Activated naive CD4-positive, alpha-beta T cell treated with anti-CD3 and anti-CD28 coated beads for 36 hours (primary cell): ENCODE measurements at regions of chr13 and their contacts with region 1.

Region 1: DNA sequence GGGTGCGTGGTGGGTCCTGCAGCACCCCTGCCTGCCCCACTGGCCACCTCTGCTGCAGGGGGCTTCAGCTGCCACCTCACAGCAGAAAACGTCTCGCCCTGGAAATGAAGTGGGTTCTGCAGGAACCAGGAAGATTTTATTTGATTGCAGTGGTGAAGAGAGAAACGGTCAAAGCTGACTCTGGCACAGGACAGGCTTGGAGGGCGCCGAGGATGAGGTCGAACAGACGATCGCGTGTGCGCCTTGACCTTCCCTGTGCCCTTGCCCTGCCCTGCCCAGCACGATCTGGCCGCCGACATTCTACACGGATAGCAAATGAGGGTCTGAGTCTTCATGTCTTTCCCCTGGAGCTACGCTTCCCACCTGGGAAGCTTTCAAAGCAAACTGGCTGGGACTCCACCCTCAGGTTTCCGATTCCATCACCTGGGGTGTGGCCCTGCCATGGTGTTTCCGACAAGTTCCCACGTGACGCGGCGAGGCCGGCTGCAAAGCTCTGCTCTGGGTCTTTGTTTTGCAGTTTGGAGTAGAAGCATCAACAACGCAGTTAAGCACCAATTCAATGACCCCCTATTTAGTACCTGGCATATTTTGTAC is 50.3 kb upstream of the TUBGCP3 start:
- DNase-seq: no peak
- H3K4me3 Mint-ChIP-seq: no peak overlapping the region
- H3K27ac Mint-ChIP-seq: no peak overlapping the region
- H3K4me1 Mint-ChIP-seq: peaks cover 5% of the 10 kb centered on the region
- H3K27me3 Mint-ChIP-seq: peaks cover 19% of the 10 kb centered on the region

Region 2: DNA sequence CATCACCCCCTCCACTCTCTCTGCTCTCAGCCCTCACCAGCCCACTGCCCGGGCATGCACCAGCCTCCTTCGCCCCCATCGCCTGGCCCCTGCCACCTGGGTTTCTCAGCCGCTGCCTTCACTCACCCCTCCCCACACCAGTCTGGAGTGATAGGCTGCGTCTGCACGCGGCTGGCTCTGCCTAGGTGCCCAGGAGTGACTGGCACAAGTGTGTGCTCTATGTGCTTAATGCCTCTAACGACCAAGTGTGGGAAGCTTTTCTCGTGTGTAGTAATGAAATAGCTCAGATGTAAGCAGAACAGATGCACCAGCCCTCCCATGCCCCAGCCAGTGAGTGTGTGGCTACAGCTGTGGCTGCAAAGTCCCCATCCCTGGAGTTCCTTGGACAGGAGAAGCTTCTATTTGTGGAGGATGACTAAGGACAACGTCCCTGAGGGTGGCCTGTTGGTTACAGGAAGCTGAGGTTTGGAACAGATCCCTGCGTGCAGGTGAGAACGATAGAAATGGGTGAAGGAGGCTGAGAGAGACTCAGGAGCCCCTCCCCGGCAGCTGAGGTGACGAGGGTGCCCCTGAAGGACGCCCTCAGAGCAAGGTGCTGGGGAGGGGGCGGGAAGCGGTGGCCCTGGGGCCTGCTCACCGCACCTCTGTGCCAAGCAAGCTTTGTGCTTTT is 87.2 kb after region 1 on chr13:
- CTCF ChIA-PET with region 1: interaction called, 10 read pairs
- intact Hi-C with region 1: no loop called
- DNase-seq: peak; percentile 56
- H3K4me3 Mint-ChIP-seq: no peak overlapping the region
- H3K27ac Mint-ChIP-seq: no peak overlapping the region
- H3K4me1 Mint-ChIP-seq: peaks cover 36% of the 10 kb centered on the region
- H3K27me3 Mint-ChIP-seq: no peaks in the 10 kb centered on the region

Region 3: GRCh38 chr13:112873851-112874750 is 235.8 kb after region 1 on chr13:
- CTCF ChIA-PET with region 1: interaction called, 48 read pairs
- intact Hi-C with region 1: loop called (anchors 1 kb)
- DNase-seq: peak; percentile 88
- H3K4me3 Mint-ChIP-seq: peak overlapping the region; percentile 47
- H3K27ac Mint-ChIP-seq: peak overlapping the region; percentile 92
- H3K4me1 Mint-ChIP-seq: peaks cover 19% of the 10 kb centered on the region
- H3K27me3 Mint-ChIP-seq: no peaks in the 10 kb centered on the region

Region 4: GRCh38 chr13:112893570-112894422 is 255.5 kb after region 1 on chr13:
- CTCF ChIA-PET with region 1: no interaction called
- intact Hi-C with region 1: loop called (anchors 5 kb)
- DNase-seq: peak; percentile 46
- H3K4me3 Mint-ChIP-seq: no peak overlapping the region
- H3K27ac Mint-ChIP-seq: no peak overlapping the region
- H3K4me1 Mint-ChIP-seq: peaks cover 13% of the 10 kb centered on the region
- H3K27me3 Mint-ChIP-seq: no peaks in the 10 kb centered on the region